Activated CD4-positive, alpha-beta T cell treated with anti-CD3 and anti-CD28 coated beads for 36 hours (primary cell): ENCODE measurements at regions of chr2 and their contacts with region 1.

Region 1: DNA sequence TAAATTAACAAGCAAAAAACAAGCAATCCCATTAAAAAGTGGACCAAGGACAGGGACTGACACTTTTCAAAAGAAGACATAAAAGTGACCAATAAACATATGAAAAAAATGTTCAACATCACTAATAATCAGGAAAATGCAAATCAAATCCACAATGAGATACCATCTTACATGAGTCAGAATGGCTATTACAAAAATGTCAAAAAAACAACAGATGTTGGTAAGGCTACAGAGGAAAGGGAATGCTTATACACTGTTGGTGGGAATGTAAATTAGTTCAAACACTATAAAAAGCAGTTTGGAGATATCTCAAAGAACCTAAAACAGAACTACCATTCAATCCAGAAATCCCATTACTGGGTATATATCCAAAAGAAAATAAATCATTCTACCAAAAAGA is 78.2 kb downstream of the SUCLG1 start:
- DNase-seq: no peak
- ATAC-seq: no peak
- H3K4me3 Mint-ChIP-seq: no peak overlapping the region
- H3K27ac Mint-ChIP-seq: no peak overlapping the region
- H3K4me1 Mint-ChIP-seq: no peaks in the 10 kb centered on the region
- H3K27me3 Mint-ChIP-seq: peaks cover 27% of the 10 kb centered on the region

Region 2: DNA sequence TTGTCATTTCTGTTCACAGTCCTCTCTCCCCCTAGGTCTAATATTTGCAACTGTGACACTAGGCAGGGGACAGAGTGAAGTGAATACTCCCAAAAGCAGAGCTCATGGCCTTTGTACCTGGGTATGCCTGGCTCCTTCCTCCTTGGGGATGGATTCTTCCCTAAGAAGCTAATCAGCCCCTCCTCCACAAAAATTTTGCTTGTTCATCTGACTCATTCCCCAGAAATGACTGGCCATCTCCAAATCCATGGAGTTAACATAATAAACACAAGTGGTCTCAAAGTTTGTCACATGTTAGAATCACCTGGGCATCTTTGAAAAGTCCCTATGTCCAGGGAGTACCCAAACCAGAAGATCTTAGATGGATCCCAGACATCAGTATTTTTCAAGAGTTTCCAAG is 13.0 kb after region 1 on chr2:
- CTCF ChIA-PET with region 1: no interaction called
- POLR2A ChIA-PET with region 1: no interaction called
- intact Hi-C with region 1: loop called in 1 of 2 experiments (anchors 1 kb)
- DNase-seq: no peak
- ATAC-seq: no peak
- H3K4me3 Mint-ChIP-seq: no peak overlapping the region
- H3K27ac Mint-ChIP-seq: no peak overlapping the region
- H3K4me1 Mint-ChIP-seq: no peaks in the 10 kb centered on the region
- H3K27me3 Mint-ChIP-seq: peaks cover 2% of the 10 kb centered on the region